Psoas muscle (tissue), 8 donors: ENCODE measurements at regions of chr12 and their contacts with region 1.

Region 1: DNA sequence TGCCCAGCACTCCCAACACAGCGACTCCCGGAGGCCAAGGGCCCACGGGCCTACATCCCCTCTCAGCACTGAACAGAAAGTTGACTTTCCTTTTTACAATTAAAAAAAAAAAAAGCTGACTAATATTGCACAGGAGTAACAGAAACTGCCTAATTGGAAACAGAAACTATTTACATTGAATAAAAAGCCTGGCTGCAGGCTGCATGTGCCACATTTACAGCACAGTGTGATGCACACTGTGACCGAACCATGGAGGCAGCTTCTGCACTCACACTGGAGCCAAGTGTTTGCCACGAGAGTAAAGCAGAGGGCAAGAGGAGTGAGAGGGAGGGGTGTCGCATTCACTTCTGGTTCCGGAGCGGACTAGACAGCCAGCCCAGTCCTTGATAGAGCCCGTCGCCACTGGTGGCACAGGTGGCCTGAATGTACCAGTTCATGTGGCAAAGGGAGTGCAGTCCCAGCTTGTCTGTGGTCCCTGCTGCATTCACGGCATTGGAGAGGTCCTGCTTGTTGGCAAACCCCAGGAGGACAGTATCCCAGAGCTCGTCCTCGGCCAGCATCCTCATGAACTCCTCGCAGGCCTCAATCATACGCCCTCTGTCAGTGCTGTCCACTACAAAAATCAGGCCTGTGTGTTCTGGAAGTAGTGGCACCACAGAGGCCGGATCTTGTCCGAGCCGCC is 59.2 kb downstream of the SPPL3 start:
- DNase-seq: no peak
- ATAC-seq: peak in 2 of 4 donors; percentile 11 to 13
- H3K4me3 ChIP-seq: no peak overlapping the region
- H3K27ac ChIP-seq: no peak overlapping the region
- H3K4me1 ChIP-seq: peaks cover 78% of the 10 kb centered on the region
- H3K27me3 ChIP-seq: no peaks in the 10 kb centered on the region
- CTCF ChIP-seq: no peak

Region 2: GRCh38 chr12:120662879-120663278 is 182.0 kb before region 1 on chr12:
- intact Hi-C with region 1: no loop called
- DNase-seq: no peak
- ATAC-seq: no peak
- H3K4me3 ChIP-seq: no peak overlapping the region
- H3K27ac ChIP-seq: no peak overlapping the region
- H3K4me1 ChIP-seq: no peaks in the 10 kb centered on the region
- H3K27me3 ChIP-seq: peaks cover 0 to 5% (median 0%) of the 10 kb centered on the region in 3 donors
- CTCF ChIP-seq: no peak

Region 3: GRCh38 chr12:120799243-120800045 is 45.5 kb before region 1 on chr12:
- intact Hi-C with region 1: loop called in 1 of 2 experiments (anchors 5 kb)
- DNase-seq: no peak
- ATAC-seq: no peak
- H3K4me3 ChIP-seq: no peak overlapping the region
- H3K27ac ChIP-seq: no peak overlapping the region
- H3K4me1 ChIP-seq: peaks cover 21% of the 10 kb centered on the region
- H3K27me3 ChIP-seq: no peaks in the 10 kb centered on the region
- CTCF ChIP-seq: no peak